H1 (cell line): ENCODE measurements at regions of chr1 and their contacts with region 1.

Region 1: GRCh38 chr1:231091831-231092301 is 51.8 kb upstream of the FAM89A start:
- DNase-seq: peak; percentile 33 to 83
- H3K4me3 ChIP-seq: no peak overlapping the region
- H3K27ac ChIP-seq: no peak overlapping the region
- H3K4me1 ChIP-seq: no peaks in the 10 kb centered on the region
- H3K27me3 ChIP-seq: peaks cover 0 to 3% (median 0%) of the 10 kb centered on the region in 4 experiments; a peak in 2 of 7 replicates
- CTCF ChIP-seq: peak; percentile 87 to 95 (median 94)
- EP300 ChIP-seq: no peak
- POLR2A ChIP-seq: no peak
- RAD21 ChIP-seq: peak; percentile 76 to 83

Region 2: GRCh38 chr1:230922620-230923019 is 169.2 kb before region 1 on chr1:
- CTCF ChIA-PET with region 1: interaction called, 10 read pairs
- POLR2A ChIA-PET with region 1: no interaction called
- DNase-seq: no peak
- H3K4me3 ChIP-seq: no peak overlapping the region
- H3K27ac ChIP-seq: no peak overlapping the region
- H3K4me1 ChIP-seq: no peaks in the 10 kb centered on the region
- H3K27me3 ChIP-seq: no peaks in the 10 kb centered on the region
- CTCF ChIP-seq: peak in 1 of 3 experiments; percentile 9; a peak in 1 of 4 replicates
- EP300 ChIP-seq: no peak
- POLR2A ChIP-seq: no peak
- RAD21 ChIP-seq: 0 out of 4 replicates have a peak, but pooled peaks of 1 of the 2 experiments have one; percentile 7

Region 3: GRCh38 chr1:231020139-231020601 is 71.7 kb before region 1 on chr1:
- CTCF ChIA-PET with region 1: interaction called, 10 read pairs
- POLR2A ChIA-PET with region 1: no interaction called
- DNase-seq: no peak
- H3K4me3 ChIP-seq: no peak overlapping the region
- H3K27ac ChIP-seq: no peak overlapping the region
- H3K4me1 ChIP-seq: peaks cover 2 to 7% (median 6%) of the 10 kb centered on the region in 4 experiments; a peak in 5 of 7 replicates
- H3K27me3 ChIP-seq: peaks cover 0 to 6% (median 2%) of the 10 kb centered on the region in 4 experiments; a peak in 3 of 7 replicates
- CTCF ChIP-seq: no peak
- EP300 ChIP-seq: no peak
- POLR2A ChIP-seq: no peak
- RAD21 ChIP-seq: no peak

Region 4: DNA sequence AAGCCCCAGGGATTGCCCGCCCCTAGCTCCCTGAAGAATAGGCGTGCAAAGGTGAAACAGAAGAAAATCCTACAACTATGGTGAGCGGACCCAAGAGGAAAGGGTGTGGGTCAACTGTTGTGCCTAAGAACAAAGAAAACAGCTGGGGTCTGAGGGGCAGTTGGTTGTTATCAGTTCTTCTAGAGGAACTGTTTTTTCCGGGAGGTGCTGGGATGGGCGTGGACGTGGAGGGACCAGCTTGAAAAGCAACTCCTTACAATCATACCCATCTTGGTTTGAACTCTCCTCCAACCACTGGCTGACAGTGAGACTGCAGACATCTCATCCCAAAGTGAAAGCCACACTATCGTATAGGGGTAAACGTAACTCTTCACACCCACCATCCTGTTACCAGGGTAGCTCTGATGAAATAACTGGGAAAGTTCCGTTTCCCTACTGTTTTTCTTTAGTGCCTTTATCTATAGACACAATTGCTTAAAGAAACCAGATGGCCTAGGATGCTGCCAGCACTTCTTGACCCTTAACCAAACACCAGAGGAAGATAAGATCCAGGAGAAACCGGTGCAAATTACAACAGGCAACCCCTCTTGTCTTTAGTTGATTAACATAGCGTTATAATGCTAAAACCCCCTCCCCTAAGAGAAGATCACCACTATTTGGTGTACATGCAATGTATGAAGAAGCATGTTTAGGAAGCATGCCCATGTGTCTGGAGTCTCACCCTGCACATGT is 26.2 kb before region 1 on chr1:
- CTCF ChIA-PET with region 1: interaction called, 29 read pairs
- POLR2A ChIA-PET with region 1: no interaction called
- DNase-seq: no peak
- H3K4me3 ChIP-seq: no peak overlapping the region
- H3K27ac ChIP-seq: no peak overlapping the region
- H3K4me1 ChIP-seq: no peaks in the 10 kb centered on the region; a peak in 1 of 7 replicates
- H3K27me3 ChIP-seq: no peaks in the 10 kb centered on the region
- CTCF ChIP-seq: no peak
- EP300 ChIP-seq: no peak
- POLR2A ChIP-seq: no peak
- RAD21 ChIP-seq: no peak

Region 5: GRCh38 chr1:231106347-231106746 is 14.5 kb after region 1 on chr1:
- CTCF ChIA-PET with region 1: interaction called, 11 read pairs
- POLR2A ChIA-PET with region 1: no interaction called
- DNase-seq: no peak
- H3K4me3 ChIP-seq: no peak overlapping the region
- H3K27ac ChIP-seq: no peak overlapping the region
- H3K4me1 ChIP-seq: no peaks in the 10 kb centered on the region
- H3K27me3 ChIP-seq: no peaks in the 10 kb centered on the region; a peak in 2 of 7 replicates
- CTCF ChIP-seq: no peak
- EP300 ChIP-seq: no peak
- POLR2A ChIP-seq: no peak
- RAD21 ChIP-seq: no peak

Region 6: GRCh38 chr1:231194843-231195516 is 103.1 kb after region 1 on chr1:
- CTCF ChIA-PET with region 1: interaction called, 12 read pairs
- POLR2A ChIA-PET with region 1: no interaction called
- DNase-seq: no peak
- H3K4me3 ChIP-seq: no peak overlapping the region
- H3K27ac ChIP-seq: no peak overlapping the region
- H3K4me1 ChIP-seq: peaks cover 0 to 5% (median 0%) of the 10 kb centered on the region in 4 experiments; a peak in 1 of 7 replicates
- H3K27me3 ChIP-seq: peaks cover 0 to 4% (median under 1%) of the 10 kb centered on the region in 4 experiments; a peak in 3 of 7 replicates
- CTCF ChIP-seq: no peak
- EP300 ChIP-seq: no peak
- POLR2A ChIP-seq: no peak
- RAD21 ChIP-seq: no peak

Region 7: GRCh38 chr1:231211005-231211857 is 119.4 kb after region 1 on chr1:
- CTCF ChIA-PET with region 1: interaction called, 13 read pairs
- POLR2A ChIA-PET with region 1: no interaction called
- DNase-seq: peak; percentile 81 to 99
- H3K4me3 ChIP-seq: peak overlapping the region in 1 of 4 experiments; percentile 42; a peak in 1 of 8 replicates
- H3K27ac ChIP-seq: no peak overlapping the region
- H3K4me1 ChIP-seq: peaks cover 0 to 4% (median 0%) of the 10 kb centered on the region in 4 experiments; a peak in 5 of 7 replicates
- H3K27me3 ChIP-seq: peaks cover 31 to 44% (median 39%) of the 10 kb centered on the region in 4 experiments
- CTCF ChIP-seq: peak; percentile 85 to 94 (median 93)
- EP300 ChIP-seq: no peak
- POLR2A ChIP-seq: no peak
- RAD21 ChIP-seq: peak; percentile 97 to 98